Calu3 (cell line): ENCODE measurements at regions of chr5 and their contacts with region 1.

Region 1: GRCh38 chr5:159965031-159965837 is 43.7 kb upstream of the TTC1 start:
- DNase-seq: peak; percentile 76
- H3K4me3 Mint-ChIP-seq: no peak overlapping the region
- H3K27ac Mint-ChIP-seq: no peak overlapping the region
- H3K4me1 Mint-ChIP-seq: peaks cover 10% of the 10 kb centered on the region
- H3K27me3 Mint-ChIP-seq: no peaks in the 10 kb centered on the region
- CTCF ChIP-seq: peak; percentile 81

Region 2: GRCh38 chr5:159531554-159532105 is 433.6 kb before region 1 on chr5:
- CTCF ChIA-PET with region 1: no interaction called
- intact Hi-C with region 1: loop called (anchors 1 kb)
- DNase-seq: no peak
- H3K4me3 Mint-ChIP-seq: no peak overlapping the region
- H3K27ac Mint-ChIP-seq: no peak overlapping the region
- H3K4me1 Mint-ChIP-seq: no peaks in the 10 kb centered on the region
- H3K27me3 Mint-ChIP-seq: no peaks in the 10 kb centered on the region
- CTCF ChIP-seq: peak; percentile 21

Region 3: GRCh38 chr5:160071516-160071915 is 106.3 kb after region 1 on chr5:
- CTCF ChIA-PET with region 1: no interaction called
- intact Hi-C with region 1: no loop called
- DNase-seq: no peak
- H3K4me3 Mint-ChIP-seq: no peak overlapping the region
- H3K27ac Mint-ChIP-seq: no peak overlapping the region
- H3K4me1 Mint-ChIP-seq: no peaks in the 10 kb centered on the region
- H3K27me3 Mint-ChIP-seq: no peaks in the 10 kb centered on the region
- CTCF ChIP-seq: no peak